ENCODE measurements at regions of chr2 and their contacts with region 1.

Region 1: GRCh38 chr2:233404222-233404621 is 49.9 kb downstream of the DGKD start:
- DNase-seq: peak; percentile 43 to 83 (median 66)
- ATAC-seq: peak; percentile 63 to 71 (median 66)
- H3K4me3 ChIP-seq: no peak overlapping the region
- H3K4me3 Mint-ChIP-seq: peak overlapping the region in 1 of 3 donors; percentile 55
- H3K27ac ChIP-seq: peak overlapping the region; percentile 2
- H3K27ac Mint-ChIP-seq: peak overlapping the region; percentile 83 to 88
- H3K4me1 ChIP-seq: peaks cover 36 to 56% of the 10 kb centered on the region in 2 experiments
- H3K4me1 Mint-ChIP-seq: peaks cover 78 to 85% (median 78%) of the 10 kb centered on the region in 3 donors
- H3K27me3 ChIP-seq: no peaks in the 10 kb centered on the region
- H3K27me3 Mint-ChIP-seq: no peaks in the 10 kb centered on the region

Region 2: GRCh38 chr2:233098615-233099014 is 305.6 kb before region 1 on chr2:
- CTCF ChIA-PET with region 1: no interaction called
- POLR2A ChIA-PET with region 1: no interaction called
- DNase-seq: peak in 1 of 35 experiments; percentile 38
- ATAC-seq: no peak
- H3K4me3 ChIP-seq: no peak overlapping the region
- H3K4me3 Mint-ChIP-seq: no peak overlapping the region
- H3K27ac ChIP-seq: no peak overlapping the region
- H3K27ac Mint-ChIP-seq: peak overlapping the region; percentile 64 to 69
- H3K4me1 ChIP-seq: peaks cover 17 to 61% of the 10 kb centered on the region in 2 experiments
- H3K4me1 Mint-ChIP-seq: peaks cover 74 to 83% (median 75%) of the 10 kb centered on the region in 3 donors
- H3K27me3 ChIP-seq: no peaks in the 10 kb centered on the region
- H3K27me3 Mint-ChIP-seq: no peaks in the 10 kb centered on the region

Region 3: DNA sequence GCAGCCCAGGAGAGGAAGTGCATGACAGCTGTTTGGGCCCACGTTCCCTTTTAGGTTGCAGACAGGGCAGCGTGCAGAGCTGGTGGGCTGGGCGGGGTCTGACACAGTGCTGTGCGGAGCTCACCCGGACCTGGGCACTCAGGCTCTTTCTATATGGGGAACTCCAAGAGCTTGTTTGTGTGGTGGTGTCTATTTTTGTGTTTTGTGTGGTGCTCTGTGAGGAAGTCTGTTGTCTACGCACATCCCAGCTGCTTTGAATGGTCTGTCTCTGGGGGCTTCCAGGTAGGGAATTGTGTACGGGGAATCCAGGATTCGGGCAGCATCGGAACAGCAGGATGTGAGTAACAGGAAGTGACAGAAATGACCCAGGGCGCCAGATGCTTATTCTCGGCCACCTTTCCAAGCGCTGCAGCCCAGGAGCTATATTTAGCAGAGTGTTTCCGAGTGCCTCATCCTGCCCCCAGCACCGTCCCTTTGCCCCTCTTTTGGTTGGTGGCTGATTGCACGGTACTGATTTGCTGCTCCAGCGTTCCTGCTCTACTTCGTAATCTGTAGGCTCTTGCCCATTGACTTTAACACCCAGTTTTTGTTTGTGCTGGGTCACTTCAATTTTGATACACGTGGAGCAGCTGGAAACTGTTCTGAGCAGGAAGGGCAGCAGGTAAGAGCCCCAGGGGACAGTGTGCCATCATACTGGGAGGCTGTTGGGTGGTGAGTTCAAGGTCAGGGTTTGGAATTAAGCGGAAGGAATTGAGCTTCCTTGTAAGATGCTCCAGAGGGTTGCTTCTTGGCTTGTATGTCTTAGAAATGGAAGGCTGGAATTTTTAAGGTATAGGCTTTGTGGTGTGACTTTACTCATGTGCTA is 14.8 kb after region 1 on chr2:
- CTCF ChIA-PET with region 1: interaction called, 4 to 14 read pairs
- POLR2A ChIA-PET with region 1: interaction called in 1 of 2 experiments, 3 read pairs
- DNase-seq: peak in 34 of 35 experiments; percentile 24 to 76 (median 53)
- ATAC-seq: peak; percentile 54 to 75 (median 55)
- H3K4me3 ChIP-seq: peak overlapping the region; percentile 44 to 64
- H3K4me3 Mint-ChIP-seq: peak overlapping the region; percentile 79 to 89 (median 89)
- H3K27ac ChIP-seq: peak overlapping the region; percentile 76
- H3K27ac Mint-ChIP-seq: peak overlapping the region; percentile 98 to 100
- H3K4me1 ChIP-seq: peaks cover 58 to 96% of the 10 kb centered on the region in 2 experiments
- H3K4me1 Mint-ChIP-seq: peaks cover 97 to 98% (median 98%) of the 10 kb centered on the region in 3 donors
- H3K27me3 ChIP-seq: no peaks in the 10 kb centered on the region
- H3K27me3 Mint-ChIP-seq: no peaks in the 10 kb centered on the region

Region 4: GRCh38 chr2:233443468-233444183 is 39.4 kb after region 1 on chr2:
- CTCF ChIA-PET with region 1: interaction called, 27 to 158 read pairs
- POLR2A ChIA-PET with region 1: no interaction called
- DNase-seq: peak; percentile 68 to 91 (median 82)
- ATAC-seq: peak; percentile 87 to 95 (median 90)
- H3K4me3 ChIP-seq: no peak overlapping the region
- H3K4me3 Mint-ChIP-seq: no peak overlapping the region
- H3K27ac ChIP-seq: no peak overlapping the region
- H3K27ac Mint-ChIP-seq: peak overlapping the region; percentile 70 to 87
- H3K4me1 ChIP-seq: peaks cover 0 to 17% of the 10 kb centered on the region in 2 experiments
- H3K4me1 Mint-ChIP-seq: peaks cover 23 to 35% (median 28%) of the 10 kb centered on the region in 3 donors
- H3K27me3 ChIP-seq: no peaks in the 10 kb centered on the region
- H3K27me3 Mint-ChIP-seq: no peaks in the 10 kb centered on the region

Region 5: DNA sequence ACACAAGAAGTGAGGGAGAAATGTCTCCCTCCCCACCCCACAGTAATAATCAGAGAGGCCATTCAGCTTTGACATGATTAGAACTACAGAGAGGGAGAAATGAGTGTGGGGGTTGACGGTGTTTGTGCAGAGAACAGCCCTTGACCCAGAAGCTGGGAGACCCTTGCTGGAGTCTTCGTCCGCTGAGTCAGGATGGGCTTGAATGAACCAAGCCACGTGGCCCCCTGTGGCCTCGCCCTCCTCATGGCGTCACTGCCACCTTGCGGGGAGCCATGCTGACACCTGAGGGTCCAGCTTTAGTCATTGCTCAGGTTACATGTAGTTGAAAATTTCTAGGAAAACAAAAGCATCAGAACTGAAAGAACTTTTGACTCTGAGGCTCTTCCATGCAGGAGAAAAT is 51.3 kb after region 1 on chr2:
- CTCF ChIA-PET with region 1: no interaction called
- POLR2A ChIA-PET with region 1: interaction called in 1 of 2 experiments, 10 read pairs
- DNase-seq: no peak
- ATAC-seq: no peak
- H3K4me3 ChIP-seq: no peak overlapping the region
- H3K4me3 Mint-ChIP-seq: no peak overlapping the region
- H3K27ac ChIP-seq: no peak overlapping the region
- H3K27ac Mint-ChIP-seq: peak overlapping the region in 1 of 2 donors; percentile 44
- H3K4me1 ChIP-seq: no peaks in the 10 kb centered on the region
- H3K4me1 Mint-ChIP-seq: peaks cover 0 to 5% (median 0%) of the 10 kb centered on the region in 3 donors
- H3K27me3 ChIP-seq: no peaks in the 10 kb centered on the region
- H3K27me3 Mint-ChIP-seq: no peaks in the 10 kb centered on the region

Region 6: GRCh38 chr2:233718552-233718951 is 314.3 kb after region 1 on chr2 and contains the start of gene UGT1A4:
- CTCF ChIA-PET with region 1: no interaction called
- POLR2A ChIA-PET with region 1: no interaction called
- DNase-seq: no peak
- ATAC-seq: no peak
- H3K4me3 ChIP-seq: no peak within 1 kb of the TSS
- H3K4me3 Mint-ChIP-seq: no peak within 1 kb of the TSS
- H3K27ac ChIP-seq: no peak within 1 kb of the TSS
- H3K27ac Mint-ChIP-seq: no peak within 1 kb of the TSS
- H3K4me1 ChIP-seq: no peaks in the 10 kb centered on the region
- H3K4me1 Mint-ChIP-seq: no peaks in the 10 kb centered on the region
- H3K27me3 ChIP-seq: peaks cover 2 to 18% of the 10 kb centered on the region in 2 experiments
- H3K27me3 Mint-ChIP-seq: peaks cover 44 to 48% of the 10 kb centered on the region in 2 donors
- total RNA-seq, gene UGT1A4: not detected

Measured in T-cell (primary cell).